OCI-LY7 (cell line): ENCODE measurements at regions of chr14 and their contacts with region 1.

Region 1: GRCh38 chr14:20482382-20482781 is 13.2 kb downstream of the PNP start:
- DNase-seq: no peak
- H3K4me3 ChIP-seq: no peak overlapping the region
- H3K27ac ChIP-seq: no peak overlapping the region
- H3K4me1 ChIP-seq: peaks cover 5% of the 10 kb centered on the region
- CTCF ChIP-seq: no peak

Region 2: GRCh38 chr14:20469242-20469889 is 13.0 kb before region 1 on chr14 and contains the start of gene PNP:
- CTCF ChIA-PET with region 1: no interaction called
- POLR2A ChIA-PET with region 1: interaction called, 13 read pairs
- intact Hi-C with region 1: no loop called
- DNase-seq: peak; percentile 92
- H3K4me3 ChIP-seq: peak within 1 kb of the TSS; percentile 83
- H3K27ac ChIP-seq: peak within 1 kb of the TSS; percentile 71
- H3K4me1 ChIP-seq: peaks cover 23% of the 10 kb centered on the region
- CTCF ChIP-seq: peak; percentile 21; the same call in 1 of the 2 replicates
- total RNA-seq, gene PNP: 120 and 127 TPM in 2 replicates

Region 3: GRCh38 chr14:21039585-21040369 is 557.4 kb after region 1 on chr14:
- CTCF ChIA-PET with region 1: no interaction called
- POLR2A ChIA-PET with region 1: no interaction called
- intact Hi-C with region 1: no loop called
- DNase-seq: peak; percentile 47
- H3K4me3 ChIP-seq: no peak overlapping the region
- H3K27ac ChIP-seq: no peak overlapping the region
- H3K4me1 ChIP-seq: no peaks in the 10 kb centered on the region
- CTCF ChIP-seq: peak; percentile 76